PC-9 (cell line): ENCODE measurements at regions of chr16 and their contacts with region 1.

Region 1: DNA sequence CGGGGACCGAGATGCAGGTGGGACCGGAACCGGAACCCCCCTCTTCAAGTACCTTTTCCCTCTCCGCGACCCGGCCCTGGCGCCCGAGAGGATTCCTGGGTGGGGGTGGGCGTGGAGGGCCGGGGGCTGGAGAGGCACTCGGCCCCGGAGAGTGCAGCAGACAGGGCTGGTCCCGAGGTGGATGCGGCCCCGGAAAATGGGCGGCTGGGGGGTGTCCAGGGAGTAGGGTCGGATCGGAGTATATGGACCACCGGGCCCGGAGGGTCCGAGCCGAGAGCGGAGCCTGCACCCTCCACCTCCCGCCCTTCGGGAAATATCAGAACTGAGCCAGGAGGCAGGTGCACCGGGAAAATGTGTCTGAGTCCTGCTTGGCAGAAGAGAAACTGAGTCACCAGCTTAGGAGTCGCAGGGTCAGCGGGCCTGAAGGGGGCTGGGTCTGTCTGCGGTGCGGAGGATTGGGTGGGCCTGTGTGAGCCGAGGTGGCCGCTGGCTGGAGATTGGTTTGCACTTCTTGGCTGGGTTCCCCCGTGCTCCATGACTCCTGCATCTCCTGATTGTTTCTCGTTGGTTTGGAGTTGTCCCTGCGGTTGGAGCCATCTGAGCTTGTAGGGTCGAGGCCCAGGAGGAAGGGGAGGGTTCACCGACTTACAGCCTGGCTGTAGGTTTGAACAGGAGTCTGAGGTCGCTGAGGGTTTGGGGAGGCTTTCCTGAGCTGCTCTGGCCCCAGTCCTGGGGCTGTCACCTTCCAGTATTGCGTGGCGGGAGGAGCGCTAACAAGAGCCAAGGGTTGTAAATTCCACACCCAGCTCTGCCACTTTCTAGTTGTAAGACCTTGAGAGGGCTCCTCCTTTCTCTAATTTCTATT is 518 bp downstream of the SH2B1 start:
- DNase-seq: peak in 1 of 2 experiments; percentile 18
- H3K4me3 ChIP-seq: peak overlapping the region; percentile 67
- H3K27ac ChIP-seq: peak overlapping the region; percentile 66
- H3K4me1 ChIP-seq: peaks cover 20% of the 10 kb centered on the region
- H3K27me3 ChIP-seq: no peaks in the 10 kb centered on the region
- CTCF ChIP-seq: no peak

Region 2: GRCh38 chr16:28513484-28514181 is 350.5 kb before region 1 on chr16:
- CTCF ChIA-PET with region 1: no interaction called
- POLR2A ChIA-PET with region 1: no interaction called
- intact Hi-C with region 1: no loop called
- DNase-seq: peak in 1 of 2 experiments; percentile 35
- H3K4me3 ChIP-seq: no peak overlapping the region
- H3K27ac ChIP-seq: no peak overlapping the region
- H3K4me1 ChIP-seq: peaks cover 20% of the 10 kb centered on the region
- H3K27me3 ChIP-seq: no peaks in the 10 kb centered on the region
- CTCF ChIP-seq: no peak

Region 3: DNA sequence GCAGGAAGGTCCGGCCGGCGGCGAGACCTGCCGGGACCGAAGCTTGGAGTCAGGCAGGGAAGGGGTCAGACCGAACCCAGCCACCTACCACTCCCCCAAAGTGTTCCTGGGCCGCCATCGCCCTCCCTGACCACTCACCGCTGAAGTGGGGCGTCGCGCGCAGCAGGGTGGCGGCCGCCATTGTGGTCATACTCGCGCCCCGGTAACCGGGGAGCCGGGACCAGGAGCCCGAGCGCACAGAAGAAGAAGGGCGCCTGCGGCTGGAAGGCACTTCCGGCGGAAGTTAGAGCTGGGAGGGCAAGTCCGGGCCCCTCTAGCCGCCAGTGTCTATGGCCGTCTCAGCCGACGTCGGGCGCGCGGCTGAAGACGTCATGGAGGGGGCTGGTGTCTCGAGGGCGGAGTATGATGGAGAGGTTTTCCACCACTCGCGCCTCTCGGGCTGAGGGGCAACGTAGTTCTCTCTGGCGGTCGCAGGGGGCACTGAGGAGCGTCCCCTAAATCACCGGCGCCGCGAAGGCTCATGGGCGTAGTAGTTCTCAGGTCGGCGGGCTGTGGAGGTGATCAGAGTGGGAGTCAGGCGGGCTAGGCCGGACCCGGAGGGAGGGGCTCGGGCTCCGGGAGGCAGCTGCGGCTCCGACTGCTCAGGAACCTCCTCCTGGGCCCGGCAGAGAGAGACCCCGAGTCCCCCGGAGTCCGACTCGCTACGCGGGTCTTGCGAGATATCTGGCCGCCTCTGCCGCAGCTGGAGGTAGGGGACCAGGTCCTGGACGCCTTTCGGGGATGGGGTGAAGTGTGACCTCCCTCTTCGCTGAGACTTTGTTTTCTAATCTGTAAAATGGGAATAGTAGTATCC is 17.9 kb before region 1 on chr16 and contains the start of gene TUFM:
- CTCF ChIA-PET with region 1: interaction called, 3 read pairs
- POLR2A ChIA-PET with region 1: interaction called, 29 read pairs
- intact Hi-C with region 1: loop called (anchors 1 kb)
- DNase-seq: peak; percentile 97 to 99
- H3K4me3 ChIP-seq: peak within 1 kb of the TSS; percentile 89
- H3K27ac ChIP-seq: peak within 1 kb of the TSS; percentile 35
- H3K4me1 ChIP-seq: peaks cover 8% of the 10 kb centered on the region
- H3K27me3 ChIP-seq: no peaks in the 10 kb centered on the region
- CTCF ChIP-seq: peak; percentile 69
- total RNA-seq, gene TUFM: 342 and 448 TPM in 2 replicates

Region 4: GRCh38 chr16:28958836-28959235 is 94.7 kb after region 1 on chr16:
- CTCF ChIA-PET with region 1: no interaction called
- POLR2A ChIA-PET with region 1: no interaction called
- intact Hi-C with region 1: no loop called
- DNase-seq: no peak
- H3K4me3 ChIP-seq: no peak overlapping the region
- H3K27ac ChIP-seq: no peak overlapping the region
- H3K4me1 ChIP-seq: no peaks in the 10 kb centered on the region
- H3K27me3 ChIP-seq: no peaks in the 10 kb centered on the region
- CTCF ChIP-seq: no peak

Region 5: GRCh38 chr16:28981517-28981916 is 117.4 kb after region 1 on chr16:
- CTCF ChIA-PET with region 1: no interaction called
- POLR2A ChIA-PET with region 1: no interaction called
- intact Hi-C with region 1: no loop called
- DNase-seq: no peak
- H3K4me3 ChIP-seq: no peak overlapping the region
- H3K27ac ChIP-seq: no peak overlapping the region
- H3K4me1 ChIP-seq: no peaks in the 10 kb centered on the region
- H3K27me3 ChIP-seq: no peaks in the 10 kb centered on the region
- CTCF ChIP-seq: peak; percentile 80